Activated CD4-positive, alpha-beta T cell treated with anti-CD3 and anti-CD28 coated beads for 36 hours (primary cell): ENCODE measurements at regions of chr4 and their contacts with region 1.

Region 1: DNA sequence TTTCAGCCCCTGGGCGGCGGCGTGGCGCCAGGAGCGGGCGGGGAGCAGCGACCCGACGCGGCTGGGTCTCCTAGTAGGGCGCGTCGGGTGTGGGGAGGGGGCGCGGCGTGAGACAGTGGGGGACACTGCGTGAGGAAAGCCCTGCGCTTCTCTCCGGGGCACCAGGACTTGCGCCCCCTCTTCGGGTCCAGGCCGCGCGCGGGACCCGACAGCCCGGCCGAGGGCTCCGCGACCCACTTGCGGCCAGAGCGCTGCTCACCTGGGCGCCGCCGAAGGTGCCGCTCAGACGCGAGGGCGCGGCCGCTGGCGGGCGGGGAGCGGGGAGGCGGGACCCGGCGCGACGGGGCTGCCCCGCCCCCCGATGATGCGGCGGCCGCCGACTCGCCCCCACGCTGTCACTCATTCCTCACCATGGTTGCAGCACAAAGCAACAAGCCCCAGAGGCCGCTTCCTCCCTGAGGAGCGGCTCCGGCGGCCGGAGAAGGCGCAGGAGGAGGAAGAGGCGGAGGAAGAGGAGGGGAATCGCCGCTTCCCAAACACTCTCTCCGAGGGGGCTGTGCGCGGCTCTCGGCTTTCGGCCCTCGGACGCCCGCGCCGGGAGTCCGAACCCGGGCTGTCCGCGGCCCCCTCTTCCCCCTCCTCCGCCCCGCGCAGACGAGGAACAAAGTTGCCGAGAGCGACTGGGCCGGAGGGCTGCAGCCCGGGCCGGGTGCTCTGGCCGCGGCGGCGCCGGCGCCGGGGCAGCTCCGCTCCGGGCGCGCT is at the start of gene RAPGEF2:
- DNase-seq: peak; percentile 94
- ATAC-seq: peak; percentile 83
- H3K4me3 Mint-ChIP-seq: peak within 1 kb of the TSS; percentile 73
- H3K27ac Mint-ChIP-seq: peak within 1 kb of the TSS; percentile 70
- H3K4me1 Mint-ChIP-seq: peaks cover 49% of the 10 kb centered on the region
- H3K27me3 Mint-ChIP-seq: peaks cover 2% of the 10 kb centered on the region
- total RNA-seq, gene RAPGEF2: 18.5 to 20.2 TPM

Region 2: DNA sequence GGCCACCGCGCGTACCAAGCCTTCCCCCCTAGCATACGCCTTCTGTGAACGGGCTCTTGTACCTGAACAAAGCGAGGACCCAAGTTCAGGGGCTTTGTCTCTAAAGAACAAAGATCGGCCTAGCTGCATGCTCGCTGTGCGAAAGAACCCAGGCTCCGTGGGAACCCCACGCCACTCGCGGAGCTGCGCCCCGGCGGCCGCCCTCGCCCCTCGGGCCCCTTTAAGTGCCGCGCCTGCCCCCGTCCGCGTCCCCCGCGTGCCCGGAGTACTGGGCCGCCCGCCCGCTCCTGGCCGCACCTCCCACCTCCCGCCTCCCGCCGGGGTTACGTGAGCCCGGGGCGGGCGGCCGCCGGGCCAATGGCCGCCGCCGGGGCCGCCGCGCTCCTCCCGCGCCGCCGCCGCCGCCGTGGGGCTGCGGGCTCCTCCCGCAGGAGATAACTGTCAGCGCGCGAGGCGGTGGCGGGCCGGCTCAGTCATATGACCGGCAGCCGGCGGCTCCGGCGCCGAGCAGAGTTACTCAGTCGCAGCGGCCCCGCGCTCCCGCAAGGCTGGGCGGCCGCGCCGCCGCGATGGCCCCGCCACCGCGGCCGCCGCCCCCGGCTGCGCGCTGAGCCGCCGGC is 334.1 kb before region 1 on chr4 and contains the start of gene FNIP2:
- CTCF ChIA-PET with region 1: no interaction called
- POLR2A ChIA-PET with region 1: no interaction called
- intact Hi-C with region 1: loop called (anchors 1 to 5 kb)
- DNase-seq: peak; percentile 81
- ATAC-seq: peak; percentile 81
- H3K4me3 Mint-ChIP-seq: peak within 1 kb of the TSS; percentile 97
- H3K27ac Mint-ChIP-seq: peak within 1 kb of the TSS; percentile 93
- H3K4me1 Mint-ChIP-seq: peaks cover 41% of the 10 kb centered on the region
- H3K27me3 Mint-ChIP-seq: no peaks in the 10 kb centered on the region
- total RNA-seq, gene FNIP2: 11.6 to 13.0 TPM

Region 3: GRCh38 chr4:158821228-158821971 is 281.4 kb before region 1 on chr4:
- CTCF ChIA-PET with region 1: no interaction called
- POLR2A ChIA-PET with region 1: no interaction called
- intact Hi-C with region 1: loop called in 1 of 2 experiments (anchors 5 kb)
- DNase-seq: peak; percentile 43
- ATAC-seq: peak; percentile 47
- H3K4me3 Mint-ChIP-seq: no peak overlapping the region
- H3K27ac Mint-ChIP-seq: peak overlapping the region; percentile 58
- H3K4me1 Mint-ChIP-seq: peaks cover 67% of the 10 kb centered on the region
- H3K27me3 Mint-ChIP-seq: no peaks in the 10 kb centered on the region

Region 4: DNA sequence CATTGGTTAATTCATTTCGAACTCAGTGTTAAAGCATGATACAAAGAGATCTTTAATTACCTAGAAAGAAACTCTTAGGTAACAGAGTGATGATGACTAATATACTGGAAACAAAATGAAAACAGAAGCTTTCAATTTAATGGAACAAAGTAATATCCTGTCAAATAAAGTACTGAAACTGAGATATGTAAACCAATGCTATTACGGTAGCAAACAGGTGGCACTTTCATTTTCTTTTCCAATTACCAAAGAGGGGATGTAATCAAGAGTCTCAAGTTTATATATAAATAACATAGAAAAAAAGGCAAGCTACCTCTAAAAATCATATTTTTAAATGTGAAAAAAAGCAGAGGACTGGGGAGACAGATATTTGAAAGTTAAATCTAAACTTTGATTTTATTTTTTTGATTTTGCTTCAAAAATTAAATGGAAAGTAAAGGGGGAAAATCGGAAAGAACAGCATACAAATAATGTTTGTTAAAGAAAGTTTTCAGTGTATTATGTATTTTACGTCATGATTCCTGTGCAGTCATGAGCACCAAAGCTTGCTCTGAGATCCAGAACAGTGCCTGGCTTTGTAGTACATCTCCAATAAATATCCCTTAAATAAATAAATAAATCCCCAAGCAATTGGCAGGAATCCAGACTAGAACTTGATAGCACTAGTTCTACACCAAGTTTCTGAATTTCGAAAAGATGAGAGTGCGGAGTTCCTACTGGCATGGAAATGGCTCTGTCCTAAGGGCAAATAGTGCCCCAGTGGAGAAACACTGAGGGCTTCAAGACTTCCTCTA is 24.9 kb before region 1 on chr4:
- CTCF ChIA-PET with region 1: no interaction called
- POLR2A ChIA-PET with region 1: no interaction called
- intact Hi-C with region 1: loop called (anchors 1 to 2 kb)
- DNase-seq: no peak
- ATAC-seq: peak; percentile 84
- H3K4me3 Mint-ChIP-seq: peak overlapping the region; percentile 21
- H3K27ac Mint-ChIP-seq: peak overlapping the region; percentile 47
- H3K4me1 Mint-ChIP-seq: peaks cover 25% of the 10 kb centered on the region
- H3K27me3 Mint-ChIP-seq: no peaks in the 10 kb centered on the region

Region 5: GRCh38 chr4:159117968-159118367 is 15.2 kb after region 1 on chr4:
- CTCF ChIA-PET with region 1: no interaction called
- POLR2A ChIA-PET with region 1: no interaction called
- intact Hi-C with region 1: no loop called
- DNase-seq: no peak
- ATAC-seq: peak; percentile 66
- H3K4me3 Mint-ChIP-seq: no peak overlapping the region
- H3K27ac Mint-ChIP-seq: no peak overlapping the region
- H3K4me1 Mint-ChIP-seq: peaks cover 31% of the 10 kb centered on the region
- H3K27me3 Mint-ChIP-seq: no peaks in the 10 kb centered on the region